Gastrocnemius medialis (tissue), 4 donors: ENCODE measurements at regions of chr10 and their contacts with region 1.

Region 1: GRCh38 chr10:71963756-71964668 is at the start of gene CHST3:
- DNase-seq: peak in 1 of 2 donors; percentile 62
- ATAC-seq: peak; percentile 49 to 55
- H3K4me3 ChIP-seq: peak within 1 kb of the TSS; percentile 73 to 83 (median 79)
- H3K27ac ChIP-seq: peak within 1 kb of the TSS; percentile 96 to 99 (median 97)
- H3K4me1 ChIP-seq: peaks cover 42 to 52% of the 10 kb centered on the region in 2 donors
- H3K27me3 ChIP-seq: no peaks in the 10 kb centered on the region
- CTCF ChIP-seq: peak in 1 of 5 experiments; percentile 17
- POLR2A ChIP-seq: peak; percentile 37 to 49
- total RNA-seq, gene CHST3: 11.5 to 31.6 (median 16.3) TPM

Region 2: GRCh38 chr10:71927776-71928592 is 36.0 kb before region 1 on chr10:
- in situ Hi-C with region 1: no loop called
- intact Hi-C with region 1: no loop called
- DNase-seq: no peak
- ATAC-seq: no peak
- H3K4me3 ChIP-seq: no peak overlapping the region
- H3K27ac ChIP-seq: no peak overlapping the region
- H3K4me1 ChIP-seq: no peaks in the 10 kb centered on the region
- H3K27me3 ChIP-seq: no peaks in the 10 kb centered on the region
- CTCF ChIP-seq: no peak
- POLR2A ChIP-seq: no peak

Region 3: DNA sequence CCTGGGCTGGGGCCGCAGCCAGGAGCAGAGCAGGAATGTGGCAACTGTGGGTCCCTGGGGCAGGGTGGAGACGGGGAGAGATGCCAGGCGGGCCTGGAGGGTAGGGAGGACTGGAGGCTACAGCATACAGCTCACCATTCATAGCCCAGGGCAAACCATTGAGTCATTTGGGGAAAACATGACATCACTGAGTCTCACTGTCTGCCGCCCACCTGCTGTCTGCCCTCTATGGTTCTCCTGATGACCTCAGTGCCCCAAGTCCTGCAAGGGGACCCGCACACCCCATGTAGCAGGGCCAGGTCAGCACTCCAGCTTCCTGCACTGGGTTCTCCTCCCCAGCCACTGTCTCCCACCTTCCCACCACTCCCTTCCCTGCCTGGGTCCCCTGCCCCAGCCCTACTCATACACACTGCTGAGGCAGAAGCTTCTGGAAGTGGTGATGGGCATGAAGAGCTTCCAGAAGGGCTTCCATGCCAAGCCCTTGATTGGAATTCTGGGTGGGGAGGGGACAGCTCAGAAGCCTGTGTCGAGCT is 10.5 kb after region 1 on chr10:
- in situ Hi-C with region 1: no loop called
- intact Hi-C with region 1: loop called (anchors 1 kb)
- DNase-seq: peak in 1 of 2 donors; percentile 86
- ATAC-seq: peak; percentile 16 to 42
- H3K4me3 ChIP-seq: no peak overlapping the region
- H3K27ac ChIP-seq: peak overlapping the region; percentile 91 to 97 (median 92)
- H3K4me1 ChIP-seq: peaks cover 96 to 98% of the 10 kb centered on the region in 2 donors
- H3K27me3 ChIP-seq: no peaks in the 10 kb centered on the region
- CTCF ChIP-seq: no peak
- POLR2A ChIP-seq: no peak

Region 4: DNA sequence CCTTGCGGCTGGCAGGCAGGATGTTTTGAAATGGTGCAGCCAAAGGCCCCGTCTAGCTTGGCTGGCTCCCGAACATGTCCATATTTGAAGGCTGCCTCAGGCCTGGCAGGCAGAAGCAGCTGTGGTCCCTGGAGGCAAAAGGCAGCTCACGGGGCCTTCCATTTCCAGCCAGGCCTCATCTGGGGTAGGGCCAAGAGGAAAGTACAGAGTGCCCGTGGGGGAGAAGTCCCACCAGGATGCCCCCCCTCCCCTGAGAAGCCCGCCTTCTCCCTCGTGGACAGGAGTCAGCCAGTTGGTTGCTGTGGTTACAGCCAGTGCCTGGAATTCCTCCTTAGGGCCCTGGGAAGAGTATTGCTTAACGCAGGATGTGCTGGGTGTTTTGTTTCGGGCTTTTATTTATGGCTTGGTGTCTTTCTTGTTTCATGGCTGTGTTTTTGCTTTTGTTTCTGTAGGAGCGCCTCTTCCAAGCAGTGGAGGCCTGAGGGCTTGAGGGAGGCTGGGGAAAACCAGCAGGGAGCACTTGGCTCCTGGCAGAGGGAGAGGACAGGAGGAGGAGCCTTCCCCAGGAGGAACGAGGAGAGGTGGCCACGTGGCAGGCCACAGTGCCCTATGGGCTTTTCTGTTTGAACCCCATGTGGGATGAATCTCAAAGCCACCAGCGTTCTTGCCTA is 45.5 kb after region 1 on chr10:
- in situ Hi-C with region 1: no loop called
- intact Hi-C with region 1: loop called (anchors 1 kb)
- DNase-seq: peak; percentile 86 to 94
- ATAC-seq: peak; percentile 93 to 95
- H3K4me3 ChIP-seq: peak overlapping the region in 3 of 4 donors; percentile 5 to 18 (median 11)
- H3K27ac ChIP-seq: peak overlapping the region; percentile 86 to 92 (median 88)
- H3K4me1 ChIP-seq: peaks cover 52 to 58% of the 10 kb centered on the region in 2 donors
- H3K27me3 ChIP-seq: no peaks in the 10 kb centered on the region
- CTCF ChIP-seq: no peak
- POLR2A ChIP-seq: no peak

Region 5: GRCh38 chr10:72215652-72216549 is 251.9 kb after region 1 on chr10 and contains the starts of genes ANAPC16 and ASCC1:
- in situ Hi-C with region 1: no loop called
- intact Hi-C with region 1: loop called (anchors 5 kb)
- DNase-seq: peak; percentile 83 to 89
- ATAC-seq: peak; percentile 92 to 94
- H3K4me3 ChIP-seq: peak within 1 kb of the TSS; percentile 72 to 91 (median 81)
- H3K27ac ChIP-seq: peak within 1 kb of the TSS; percentile 94 to 99 (median 98)
- H3K4me1 ChIP-seq: peaks cover 55 to 56% of the 10 kb centered on the region in 2 donors
- H3K27me3 ChIP-seq: no peaks in the 10 kb centered on the region
- CTCF ChIP-seq: no peak
- POLR2A ChIP-seq: peak; percentile 91 to 96
- total RNA-seq, gene ANAPC16: 70.9 to 168 (median 105) TPM
- total RNA-seq, gene ASCC1: 26.1 to 31.1 (median 29.6) TPM